ENCODE measurements at regions of chr12 and their contacts with region 1.

Region 1: DNA sequence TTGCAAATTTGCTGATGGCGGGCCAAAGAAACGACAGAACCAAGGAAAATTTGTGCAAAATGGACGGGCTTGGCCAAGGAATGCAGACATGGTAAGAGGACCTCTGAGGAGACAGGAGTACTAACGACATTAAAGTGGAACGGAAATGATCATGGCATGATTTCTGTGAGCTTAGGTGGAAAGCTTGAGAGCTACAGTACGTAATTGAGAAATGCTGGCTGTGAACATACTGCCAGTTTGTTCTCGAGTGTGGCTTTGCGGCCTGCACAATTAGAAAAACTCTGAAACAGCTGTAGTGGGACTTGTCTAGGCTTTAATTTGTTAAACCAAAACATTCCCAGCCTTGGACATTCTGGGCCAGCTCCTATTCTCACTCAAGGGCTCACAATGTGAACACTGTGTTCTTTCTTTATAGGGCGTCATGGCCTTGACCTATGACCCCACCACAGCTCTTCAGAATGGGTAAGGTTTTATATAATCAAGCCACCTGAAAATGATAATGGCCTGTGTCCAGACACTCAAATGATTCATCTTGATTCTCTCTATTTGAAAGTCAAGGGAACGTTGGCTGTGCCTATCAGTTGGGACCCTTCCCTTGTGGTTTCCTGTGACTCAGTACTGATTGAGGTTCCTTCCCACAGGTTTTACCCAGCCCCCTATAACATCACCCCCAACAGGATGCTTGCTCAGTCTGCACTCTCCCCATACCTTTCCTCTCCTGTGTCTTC is 48.5 kb downstream of the BAZ2A start:
- DNase-seq: peak in 11 of 35 experiments; percentile 8 to 54 (median 15)
- ATAC-seq: peak; percentile 91 to 98 (median 95)
- H3K4me3 ChIP-seq: no peak overlapping the region
- H3K4me3 Mint-ChIP-seq: peak overlapping the region in 1 of 3 donors; percentile 18
- H3K27ac ChIP-seq: peak overlapping the region; percentile 62
- H3K27ac Mint-ChIP-seq: peak overlapping the region; percentile 84 to 88
- H3K4me1 ChIP-seq: peaks cover 8 to 16% of the 10 kb centered on the region in 2 experiments
- H3K4me1 Mint-ChIP-seq: peaks cover 14 to 21% (median 20%) of the 10 kb centered on the region in 3 donors
- H3K27me3 ChIP-seq: no peaks in the 10 kb centered on the region
- H3K27me3 Mint-ChIP-seq: no peaks in the 10 kb centered on the region

Region 2: DNA sequence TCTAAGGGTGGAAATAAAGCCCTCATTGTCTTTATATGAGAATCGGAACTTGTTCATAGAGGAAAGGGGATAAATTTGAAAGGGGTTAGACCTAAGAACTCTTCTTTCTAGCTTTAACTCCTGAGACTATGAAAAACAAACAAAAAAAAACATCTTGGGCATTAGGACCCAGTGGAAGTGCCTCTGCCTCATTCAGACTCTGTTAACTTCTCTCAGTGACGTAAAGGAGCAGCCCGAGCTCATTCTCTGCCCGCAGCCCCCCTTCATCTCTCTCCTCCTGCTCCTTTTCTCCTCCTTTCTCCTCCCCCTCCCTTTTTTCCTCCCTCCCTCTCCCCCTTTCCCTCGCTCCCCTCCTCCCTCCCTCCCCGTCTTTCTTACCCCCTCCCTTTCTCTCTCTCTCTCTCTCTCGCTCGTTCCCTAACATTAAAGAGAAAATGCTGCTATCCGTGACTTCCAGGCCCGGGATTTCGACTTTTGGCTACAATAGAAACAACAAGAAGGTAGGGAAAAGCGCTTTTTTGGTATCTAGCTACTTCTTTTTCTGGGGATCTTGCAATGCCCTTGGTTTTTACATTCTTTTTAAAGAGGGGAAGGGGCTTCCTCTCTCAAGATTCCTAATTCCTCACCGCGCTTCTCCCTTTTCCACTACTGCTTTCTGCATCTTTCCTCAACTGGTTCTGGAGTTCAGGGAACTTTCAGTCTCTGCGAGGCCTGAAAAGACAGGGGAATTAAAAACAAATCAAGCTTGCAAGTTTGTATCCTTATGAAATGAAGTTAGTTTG is 59.8 kb before region 1 on chr12 and contains the start of gene RBMS2:
- CTCF ChIA-PET with region 1: interaction called, 3 read pairs
- POLR2A ChIA-PET with region 1: interaction called in 1 of 2 experiments, 12 read pairs
- DNase-seq: peak in 32 of 35 experiments; percentile 15 to 76 (median 35)
- ATAC-seq: peak; percentile 69 to 97 (median 83)
- H3K4me3 ChIP-seq: peak within 1 kb of the TSS; percentile 41 to 46
- H3K4me3 Mint-ChIP-seq: peak within 1 kb of the TSS; percentile 71 to 80 (median 76)
- H3K27ac ChIP-seq: peak within 1 kb of the TSS; percentile 51
- H3K27ac Mint-ChIP-seq: peak within 1 kb of the TSS; percentile 66 to 70
- H3K4me1 ChIP-seq: peaks cover 12 to 19% of the 10 kb centered on the region in 2 experiments
- H3K4me1 Mint-ChIP-seq: peaks cover 27 to 33% (median 31%) of the 10 kb centered on the region in 3 donors
- H3K27me3 ChIP-seq: no peaks in the 10 kb centered on the region
- H3K27me3 Mint-ChIP-seq: no peaks in the 10 kb centered on the region
- total RNA-seq, gene RBMS2: 0.99 to 8.3 (median 4.1) TPM

Region 3: DNA sequence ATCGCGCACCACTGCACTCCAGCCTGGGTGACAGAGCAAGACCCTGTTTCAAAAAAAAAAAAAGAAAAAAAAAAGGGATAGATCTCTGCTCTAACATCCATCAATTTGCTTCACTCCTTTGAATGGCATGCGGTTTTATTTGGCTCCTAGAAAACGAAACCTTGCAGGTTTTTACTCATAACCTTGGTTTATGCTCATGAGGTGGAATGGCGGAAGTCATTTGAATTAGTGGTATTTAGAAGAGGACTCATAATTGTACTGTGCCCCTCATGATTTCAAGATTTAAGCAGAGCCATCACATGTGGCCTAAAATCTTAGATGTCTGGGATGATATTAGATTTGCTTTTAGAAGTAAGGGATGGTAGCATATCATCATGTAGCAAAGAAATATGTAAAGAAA is 30.5 kb before region 1 on chr12:
- CTCF ChIA-PET with region 1: no interaction called
- POLR2A ChIA-PET with region 1: no interaction called
- DNase-seq: no peak
- ATAC-seq: no peak
- H3K4me3 ChIP-seq: no peak overlapping the region
- H3K4me3 Mint-ChIP-seq: no peak overlapping the region
- H3K27ac ChIP-seq: no peak overlapping the region
- H3K27ac Mint-ChIP-seq: no peak overlapping the region
- H3K4me1 ChIP-seq: no peaks in the 10 kb centered on the region
- H3K4me1 Mint-ChIP-seq: no peaks in the 10 kb centered on the region
- H3K27me3 ChIP-seq: no peaks in the 10 kb centered on the region
- H3K27me3 Mint-ChIP-seq: peaks cover 0 to 2% of the 10 kb centered on the region in 2 donors

Region 4: DNA sequence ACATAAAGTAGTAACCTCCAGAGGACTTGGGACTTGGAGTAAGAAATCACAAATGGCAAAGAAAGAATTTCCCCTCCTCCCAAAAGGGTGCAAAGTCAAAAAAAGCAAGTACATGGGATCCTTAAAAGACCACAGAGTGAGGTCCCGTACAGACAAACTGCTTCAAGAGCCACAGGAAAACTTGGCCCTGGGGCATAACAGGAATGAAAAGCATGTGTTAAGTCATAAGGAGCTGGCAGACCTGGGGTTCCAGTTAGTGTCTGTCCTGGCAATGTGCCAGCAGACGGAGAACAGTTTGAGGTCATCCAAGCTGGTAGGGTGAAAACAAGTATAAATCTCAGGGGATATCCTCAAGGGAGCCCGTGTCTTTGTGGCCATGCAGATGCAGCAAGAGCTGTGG is 254.7 kb after region 1 on chr12:
- CTCF ChIA-PET with region 1: no interaction called
- POLR2A ChIA-PET with region 1: no interaction called
- DNase-seq: no peak
- ATAC-seq: no peak
- H3K4me3 ChIP-seq: no peak overlapping the region
- H3K4me3 Mint-ChIP-seq: peak overlapping the region in 1 of 3 donors; percentile 52
- H3K27ac ChIP-seq: no peak overlapping the region
- H3K27ac Mint-ChIP-seq: no peak overlapping the region
- H3K4me1 ChIP-seq: peaks cover 11 to 14% of the 10 kb centered on the region in 2 experiments
- H3K4me1 Mint-ChIP-seq: peaks cover 18 to 19% (median 18%) of the 10 kb centered on the region in 3 donors
- H3K27me3 ChIP-seq: peaks cover 0 to 6% of the 10 kb centered on the region in 2 experiments
- H3K27me3 Mint-ChIP-seq: peaks cover 0 to 2% of the 10 kb centered on the region in 2 donors

Region 5: DNA sequence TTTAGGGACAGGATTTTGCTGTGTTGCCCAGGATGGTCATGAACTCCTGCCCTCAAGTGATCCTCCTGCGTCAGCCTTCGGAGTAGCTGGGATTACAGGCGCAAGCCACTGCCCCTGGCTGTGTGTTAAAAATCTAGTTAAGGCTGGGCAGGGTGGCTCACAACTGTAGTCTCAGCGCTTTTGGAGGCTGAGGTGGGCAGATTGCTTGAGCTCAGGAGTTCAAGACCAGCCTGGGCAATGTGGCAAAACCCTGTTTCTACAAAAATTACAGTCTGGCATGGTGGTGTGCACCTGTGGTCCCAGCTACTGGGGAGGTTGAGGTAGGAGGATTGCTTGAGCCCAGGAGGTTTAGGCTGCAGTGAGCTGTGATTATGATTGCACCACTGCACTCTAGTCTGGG is 929.6 kb after region 1 on chr12:
- CTCF ChIA-PET with region 1: no interaction called
- POLR2A ChIA-PET with region 1: interaction called in 1 of 2 experiments, 11 read pairs
- DNase-seq: no peak
- ATAC-seq: no peak
- H3K4me3 ChIP-seq: no peak overlapping the region
- H3K4me3 Mint-ChIP-seq: no peak overlapping the region
- H3K27ac ChIP-seq: no peak overlapping the region
- H3K27ac Mint-ChIP-seq: peak overlapping the region in 1 of 2 donors; percentile 34
- H3K4me1 ChIP-seq: no peaks in the 10 kb centered on the region
- H3K4me1 Mint-ChIP-seq: no peaks in the 10 kb centered on the region
- H3K27me3 ChIP-seq: no peaks in the 10 kb centered on the region
- H3K27me3 Mint-ChIP-seq: no peaks in the 10 kb centered on the region

Measured in T-cell (primary cell).